ENCODE measurements at regions of chr1 and their contacts with region 1.

Region 1: GRCh38 chr1:156129706-156130581 is 15.4 kb downstream of the LMNA start:
- DNase-seq: peak; percentile 97 to 98
- H3K4me3 ChIP-seq: no peak overlapping the region
- H3K4me3 Mint-ChIP-seq: peak overlapping the region; percentile 0
- H3K27ac Mint-ChIP-seq: peak overlapping the region; percentile 92
- H3K4me1 ChIP-seq: peaks cover 48% of the 10 kb centered on the region
- H3K4me1 Mint-ChIP-seq: peaks cover 33% of the 10 kb centered on the region
- H3K27me3 ChIP-seq: no peaks in the 10 kb centered on the region
- H3K27me3 Mint-ChIP-seq: no peaks in the 10 kb centered on the region
- CTCF ChIP-seq: peak; percentile 92 to 97

Region 2: DNA sequence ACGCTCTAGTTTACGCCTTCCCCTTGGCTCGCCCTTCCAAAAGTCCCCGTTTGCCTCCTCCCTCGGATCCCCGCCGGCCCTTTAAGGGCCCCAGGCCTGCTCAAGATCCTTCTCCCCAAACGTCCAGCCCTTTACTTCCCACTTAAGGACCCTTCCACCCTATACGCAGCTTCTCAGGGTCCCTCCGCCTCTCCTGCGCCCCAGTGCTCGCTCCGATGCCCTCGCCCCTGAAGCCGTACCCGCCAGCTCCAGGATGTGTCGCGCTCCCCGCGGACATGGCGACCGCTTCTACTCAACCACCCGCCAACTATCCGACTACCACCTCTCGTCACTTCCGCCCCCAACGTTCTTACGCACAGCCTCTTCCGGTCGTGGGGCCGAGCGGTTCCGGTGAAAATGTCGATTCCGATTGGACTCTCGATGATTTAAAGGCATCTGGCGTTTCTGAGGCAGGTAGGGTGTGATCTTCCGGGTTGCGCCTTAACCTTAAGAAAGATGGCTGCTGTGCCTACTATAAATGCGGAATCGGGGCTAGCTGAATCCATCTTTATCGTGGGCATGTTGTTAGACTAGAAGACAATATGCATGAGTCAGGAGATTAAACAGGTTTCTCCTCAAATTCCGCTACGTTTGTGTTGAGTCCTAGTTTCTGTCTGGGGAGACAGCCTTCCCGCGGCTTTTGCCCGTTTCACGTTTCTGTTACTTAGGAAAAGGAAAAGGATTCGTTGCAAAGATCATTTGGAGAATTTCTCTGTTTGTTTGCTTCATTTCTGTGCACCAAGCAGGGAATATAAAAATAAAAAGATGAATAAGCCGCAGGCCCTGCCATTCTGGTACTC is 195.6 kb before region 1 on chr1 and contains the start of gene KHDC4:
- CTCF ChIA-PET with region 1: no interaction called
- POLR2A ChIA-PET with region 1: no interaction called
- intact Hi-C with region 1: loop called (anchors 1 kb)
- DNase-seq: peak; percentile 94 to 96
- H3K4me3 ChIP-seq: peak within 1 kb of the TSS; percentile 60
- H3K4me3 Mint-ChIP-seq: no peak within 1 kb of the TSS
- H3K27ac Mint-ChIP-seq: no peak within 1 kb of the TSS
- H3K4me1 ChIP-seq: peaks cover 20% of the 10 kb centered on the region
- H3K4me1 Mint-ChIP-seq: peaks cover 13% of the 10 kb centered on the region
- H3K27me3 ChIP-seq: no peaks in the 10 kb centered on the region
- H3K27me3 Mint-ChIP-seq: no peaks in the 10 kb centered on the region
- CTCF ChIP-seq: no peak
- total RNA-seq, gene KHDC4: 68.5 and 72.9 TPM in 2 replicates

Region 3: GRCh38 chr1:156090822-156091188 is 39.1 kb before region 1 on chr1:
- CTCF ChIA-PET with region 1: interaction called, 115 read pairs
- POLR2A ChIA-PET with region 1: interaction called, 4 read pairs
- intact Hi-C with region 1: loop called (anchors 1 kb)
- DNase-seq: peak; percentile 86 to 89
- H3K4me3 ChIP-seq: no peak overlapping the region
- H3K4me3 Mint-ChIP-seq: no peak overlapping the region
- H3K27ac Mint-ChIP-seq: peak overlapping the region; percentile 60
- H3K4me1 ChIP-seq: peaks cover 24% of the 10 kb centered on the region
- H3K4me1 Mint-ChIP-seq: peaks cover 29% of the 10 kb centered on the region
- H3K27me3 ChIP-seq: no peaks in the 10 kb centered on the region
- H3K27me3 Mint-ChIP-seq: no peaks in the 10 kb centered on the region
- CTCF ChIP-seq: peak; percentile 76 to 92

Region 4: DNA sequence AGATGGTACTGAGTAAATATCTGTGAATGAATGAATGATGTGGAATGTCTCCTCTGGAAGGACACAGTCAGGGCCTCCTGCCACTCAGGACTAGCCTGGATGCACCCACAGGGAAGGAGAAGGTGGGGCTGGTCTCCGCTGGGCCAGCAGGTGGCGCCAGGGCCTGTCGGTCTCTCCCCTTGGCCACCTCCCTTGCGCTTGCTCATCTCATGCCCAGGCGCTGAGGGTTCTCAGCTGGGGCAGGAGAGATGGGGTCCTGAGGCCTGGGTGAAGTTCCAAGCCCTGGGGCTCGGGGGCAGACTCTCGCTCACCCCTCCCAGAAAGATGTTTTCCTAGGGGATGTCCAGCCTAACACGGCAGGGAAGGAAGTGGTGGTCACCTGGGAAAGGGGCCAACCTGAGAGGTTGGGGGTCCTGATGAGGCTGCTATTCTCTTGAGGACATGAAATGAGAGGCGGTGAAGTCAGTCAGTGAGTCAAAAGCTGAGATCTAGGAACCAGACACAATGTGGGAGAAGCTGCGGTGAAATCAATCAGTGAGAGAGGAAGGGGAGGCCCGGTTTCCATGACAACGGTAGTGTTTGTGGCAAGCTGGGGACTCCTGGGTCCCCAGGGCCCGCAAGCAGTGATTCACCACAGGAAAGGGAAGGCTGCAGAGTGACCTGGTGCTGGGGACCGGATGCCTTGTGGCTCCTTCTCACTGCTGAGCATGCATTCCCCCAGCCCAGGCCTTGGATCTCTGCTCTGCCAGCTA is 33.1 kb before region 1 on chr1:
- CTCF ChIA-PET with region 1: interaction called, 115 read pairs
- POLR2A ChIA-PET with region 1: interaction called, 4 read pairs
- intact Hi-C with region 1: loop called (anchors 1 kb)
- DNase-seq: peak; percentile 90 to 92
- H3K4me3 ChIP-seq: no peak overlapping the region
- H3K4me3 Mint-ChIP-seq: no peak overlapping the region
- H3K27ac Mint-ChIP-seq: peak overlapping the region; percentile 96
- H3K4me1 ChIP-seq: peaks cover 27% of the 10 kb centered on the region
- H3K4me1 Mint-ChIP-seq: peaks cover 35% of the 10 kb centered on the region
- H3K27me3 ChIP-seq: no peaks in the 10 kb centered on the region
- H3K27me3 Mint-ChIP-seq: no peaks in the 10 kb centered on the region
- CTCF ChIP-seq: peak; percentile 91 to 96

Region 5: DNA sequence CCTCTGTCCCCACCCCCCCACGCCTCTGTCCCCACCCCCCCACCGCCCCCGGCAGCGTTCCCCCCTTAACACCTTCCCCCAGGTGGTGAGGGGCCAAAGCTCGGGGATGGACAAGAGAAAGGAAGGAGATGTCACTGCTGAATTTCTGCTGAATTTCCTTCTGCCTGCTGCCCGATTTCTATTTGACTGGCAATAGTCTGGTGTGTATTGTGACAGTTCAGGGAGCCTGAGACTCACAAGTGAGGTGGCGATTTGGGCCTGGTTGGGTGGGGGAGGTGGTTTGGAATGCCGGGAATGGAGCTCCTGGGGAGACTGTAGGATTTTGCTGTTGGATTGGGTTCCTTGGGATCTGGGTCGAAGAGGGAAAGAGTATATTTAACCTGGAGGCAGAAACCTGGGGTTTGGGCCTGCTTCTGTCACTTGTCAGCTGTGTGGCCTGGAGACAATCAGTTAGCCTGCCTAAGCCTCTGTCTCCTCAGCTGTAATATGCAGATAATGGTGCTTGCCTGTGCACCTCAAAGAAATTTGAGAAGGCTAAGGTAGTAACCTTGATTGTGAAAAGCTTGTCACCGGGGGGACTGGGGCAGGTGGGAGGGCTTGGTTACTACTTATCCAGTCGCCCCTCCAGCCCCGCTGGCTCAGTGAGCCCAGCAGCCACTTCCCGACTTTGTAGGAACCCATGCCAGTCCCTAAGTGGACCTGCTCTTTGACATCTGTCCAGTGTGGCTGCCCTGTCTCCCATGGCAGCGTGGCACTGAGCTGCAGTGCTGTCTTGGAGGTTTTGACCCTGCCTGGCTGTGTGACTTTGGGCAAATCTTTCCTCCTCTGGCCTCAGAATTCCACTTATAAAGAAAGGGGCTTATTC is 23.1 kb before region 1 on chr1:
- CTCF ChIA-PET with region 1: interaction called, 8 read pairs
- POLR2A ChIA-PET with region 1: interaction called, 11 read pairs
- intact Hi-C with region 1: no loop called
- DNase-seq: peak; percentile 57 to 65
- H3K4me3 ChIP-seq: peak overlapping the region; percentile 15; the same call in 1 of the 2 replicates
- H3K4me3 Mint-ChIP-seq: peak overlapping the region; percentile 71
- H3K27ac Mint-ChIP-seq: peak overlapping the region; percentile 86
- H3K4me1 ChIP-seq: peaks cover 33% of the 10 kb centered on the region
- H3K4me1 Mint-ChIP-seq: peaks cover 40% of the 10 kb centered on the region
- H3K27me3 ChIP-seq: no peaks in the 10 kb centered on the region
- H3K27me3 Mint-ChIP-seq: no peaks in the 10 kb centered on the region
- CTCF ChIP-seq: no peak

Region 6: GRCh38 chr1:156114101-156114916 is 15.6 kb before region 1 on chr1 and contains the start of gene LMNA:
- CTCF ChIA-PET with region 1: interaction called, 43 read pairs
- POLR2A ChIA-PET with region 1: interaction called, 16 read pairs
- intact Hi-C with region 1: no loop called
- DNase-seq: peak; percentile 83
- H3K4me3 ChIP-seq: peak within 1 kb of the TSS; percentile 98
- H3K4me3 Mint-ChIP-seq: peak within 1 kb of the TSS; percentile 95
- H3K27ac Mint-ChIP-seq: peak within 1 kb of the TSS; percentile 63
- H3K4me1 ChIP-seq: peaks cover 35% of the 10 kb centered on the region
- H3K4me1 Mint-ChIP-seq: peaks cover 26% of the 10 kb centered on the region
- H3K27me3 ChIP-seq: no peaks in the 10 kb centered on the region
- H3K27me3 Mint-ChIP-seq: no peaks in the 10 kb centered on the region
- CTCF ChIP-seq: no peak
- total RNA-seq, gene LMNA: 112 and 113 TPM in 2 replicates